Ascending aorta (tissue), 2 donors: ENCODE measurements at regions of chr11 and their contacts with region 1.

Region 1: GRCh38 chr11:88543902-88544655 is 206.5 kb upstream of the CTSC start:
- DNase-seq: peak; percentile 28 to 87
- H3K4me3 ChIP-seq: no peak overlapping the region
- H3K27ac ChIP-seq: no peak overlapping the region
- H3K4me1 ChIP-seq: no peaks in the 10 kb centered on the region
- H3K27me3 ChIP-seq: no peaks in the 10 kb centered on the region
- CTCF ChIP-seq: peak; percentile 86 to 95 (median 89)

Region 2: GRCh38 chr11:87352759-87353707 is 1191.0 kb before region 1 on chr11:
- intact Hi-C with region 1: loop called (anchors 2 kb)
- DNase-seq: peak; percentile 33 to 92
- H3K4me3 ChIP-seq: peak overlapping the region in 1 of 2 donors; percentile 30
- H3K27ac ChIP-seq: peak overlapping the region; percentile 47 to 50
- H3K4me1 ChIP-seq: peaks cover 0 to 15% of the 10 kb centered on the region in 2 donors
- H3K27me3 ChIP-seq: no peaks in the 10 kb centered on the region
- CTCF ChIP-seq: peak; percentile 97 to 99 (median 99)

Region 3: GRCh38 chr11:88016392-88017170 is 527.5 kb before region 1 on chr11:
- intact Hi-C with region 1: loop called (anchors 1 kb)
- DNase-seq: peak in 1 of 2 donors; percentile 81
- H3K4me3 ChIP-seq: no peak overlapping the region
- H3K27ac ChIP-seq: no peak overlapping the region
- H3K4me1 ChIP-seq: no peaks in the 10 kb centered on the region
- H3K27me3 ChIP-seq: no peaks in the 10 kb centered on the region
- CTCF ChIP-seq: peak; percentile 67 to 74 (median 72)

Region 4: GRCh38 chr11:88174709-88175568 is 369.1 kb before region 1 on chr11 and contains the start of gene RAB38:
- intact Hi-C with region 1: loop called (anchors 5 kb)
- DNase-seq: peak; percentile 12 to 76
- H3K4me3 ChIP-seq: peak within 1 kb of the TSS; percentile 57 to 73
- H3K27ac ChIP-seq: peak within 1 kb of the TSS; percentile 4 to 45
- H3K4me1 ChIP-seq: peaks cover 0 to 2% of the 10 kb centered on the region in 2 donors
- H3K27me3 ChIP-seq: no peaks in the 10 kb centered on the region
- CTCF ChIP-seq: no peak
- total RNA-seq, gene RAB38: not detected

Region 5: GRCh38 chr11:88231894-88232482 is 312.1 kb before region 1 on chr11:
- intact Hi-C with region 1: loop called (anchors 10 kb)
- DNase-seq: no peak
- H3K4me3 ChIP-seq: no peak overlapping the region
- H3K27ac ChIP-seq: no peak overlapping the region
- H3K4me1 ChIP-seq: no peaks in the 10 kb centered on the region
- H3K27me3 ChIP-seq: no peaks in the 10 kb centered on the region
- CTCF ChIP-seq: peak; percentile 25 to 58 (median 29)

Region 6: GRCh38 chr11:88337181-88337986 is 206.7 kb before region 1 on chr11 and contains the start of gene CTSC:
- intact Hi-C with region 1: loop called (anchors 5 kb)
- DNase-seq: peak; percentile 62 to 96
- H3K4me3 ChIP-seq: peak within 1 kb of the TSS; percentile 74 to 95
- H3K27ac ChIP-seq: peak within 1 kb of the TSS; percentile 70 to 82
- H3K4me1 ChIP-seq: no peaks in the 10 kb centered on the region
- H3K27me3 ChIP-seq: no peaks in the 10 kb centered on the region
- CTCF ChIP-seq: no peak
- total RNA-seq, gene CTSC: 164 TPM

Region 7: DNA sequence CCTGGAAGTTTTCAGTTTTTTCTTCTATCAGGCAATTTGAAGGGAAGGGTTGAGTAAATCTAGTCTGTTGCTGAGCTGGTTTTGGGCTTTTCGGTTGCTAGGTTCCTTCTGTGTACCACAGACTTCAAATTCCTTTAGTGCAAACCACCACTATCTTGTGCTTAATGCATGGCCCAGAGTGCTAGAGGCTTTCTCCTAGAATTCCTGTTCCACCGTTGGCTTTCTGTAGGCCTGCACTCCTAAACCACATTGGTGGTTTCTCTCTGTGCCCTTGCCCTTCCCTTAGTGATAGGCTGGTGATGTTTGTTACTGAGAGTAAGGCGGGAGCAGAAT is 159.4 kb before region 1 on chr11:
- intact Hi-C with region 1: no loop called
- DNase-seq: no peak
- H3K4me3 ChIP-seq: no peak overlapping the region
- H3K27ac ChIP-seq: no peak overlapping the region
- H3K4me1 ChIP-seq: no peaks in the 10 kb centered on the region
- H3K27me3 ChIP-seq: no peaks in the 10 kb centered on the region
- CTCF ChIP-seq: no peak

Region 8: GRCh38 chr11:88439356-88439755 is 104.7 kb before region 1 on chr11:
- intact Hi-C with region 1: no loop called
- DNase-seq: no peak
- H3K4me3 ChIP-seq: no peak overlapping the region
- H3K27ac ChIP-seq: no peak overlapping the region
- H3K4me1 ChIP-seq: no peaks in the 10 kb centered on the region
- H3K27me3 ChIP-seq: no peaks in the 10 kb centered on the region
- CTCF ChIP-seq: no peak

Region 9: DNA sequence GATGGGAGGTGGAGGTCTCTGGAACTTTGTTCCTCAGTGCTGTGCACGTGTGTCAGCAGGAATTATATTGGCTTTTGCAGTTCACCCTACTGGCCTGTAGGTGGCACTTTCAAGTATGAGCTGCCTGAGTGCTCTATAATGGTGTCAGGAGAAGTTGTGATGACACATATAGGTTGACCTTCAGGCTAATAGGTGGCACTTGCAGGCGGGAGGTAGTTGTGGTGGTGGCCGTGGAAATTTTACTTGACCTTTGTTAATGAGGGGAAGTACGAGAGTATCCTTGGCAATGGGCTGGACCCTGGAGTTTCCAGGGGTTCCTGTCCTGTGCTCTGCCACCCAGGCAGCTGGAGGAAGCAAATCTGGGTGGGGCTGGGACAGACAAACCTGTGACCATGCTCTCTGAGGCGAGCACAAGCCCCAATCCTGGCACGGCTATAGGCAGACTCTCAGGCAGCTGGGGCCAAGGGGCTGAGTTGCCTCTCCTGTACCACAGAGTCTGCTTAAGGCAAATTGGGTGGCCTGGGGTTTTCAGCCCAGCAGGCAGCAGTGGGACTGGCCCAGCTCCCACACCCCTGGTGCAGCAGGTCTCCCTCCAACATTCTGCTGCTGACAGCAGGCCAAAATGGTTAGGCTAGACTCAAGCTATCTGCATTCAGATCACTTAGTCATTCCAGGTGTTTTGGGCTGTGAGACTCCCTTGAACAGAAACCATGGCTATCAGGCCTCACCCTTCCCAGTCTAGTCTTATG is 59.0 kb before region 1 on chr11:
- intact Hi-C with region 1: loop called (anchors 5 kb)
- DNase-seq: no peak
- H3K4me3 ChIP-seq: no peak overlapping the region
- H3K27ac ChIP-seq: no peak overlapping the region
- H3K4me1 ChIP-seq: peaks cover 0 to 4% of the 10 kb centered on the region in 2 donors
- H3K27me3 ChIP-seq: no peaks in the 10 kb centered on the region
- CTCF ChIP-seq: peak; percentile 6 to 45 (median 34)